CD8-positive, alpha-beta memory T cell (primary cell): ENCODE measurements at regions of chr14 and their contacts with region 1.

Region 1: GRCh38 chr14:21455911-21456667 is at the start of gene CHD8:
- DNase-seq: peak; percentile 99 to 100 (median 100)
- H3K4me3 ChIP-seq: peak within 1 kb of the TSS; percentile 96
- H3K4me3 Mint-ChIP-seq: peak within 1 kb of the TSS; percentile 94 to 99 (median 97)
- H3K27ac ChIP-seq: peak within 1 kb of the TSS; percentile 93
- H3K27ac Mint-ChIP-seq: peak within 1 kb of the TSS; percentile 92 to 99 (median 98)
- H3K4me1 ChIP-seq: peaks cover 37% of the 10 kb centered on the region
- H3K4me1 Mint-ChIP-seq: peaks cover 34 to 43% (median 42%) of the 10 kb centered on the region in 3 donors
- H3K27me3 ChIP-seq: no peaks in the 10 kb centered on the region
- H3K27me3 Mint-ChIP-seq: no peaks in the 10 kb centered on the region
- total RNA-seq, gene CHD8: 90.0 to 96.1 TPM

Region 2: DNA sequence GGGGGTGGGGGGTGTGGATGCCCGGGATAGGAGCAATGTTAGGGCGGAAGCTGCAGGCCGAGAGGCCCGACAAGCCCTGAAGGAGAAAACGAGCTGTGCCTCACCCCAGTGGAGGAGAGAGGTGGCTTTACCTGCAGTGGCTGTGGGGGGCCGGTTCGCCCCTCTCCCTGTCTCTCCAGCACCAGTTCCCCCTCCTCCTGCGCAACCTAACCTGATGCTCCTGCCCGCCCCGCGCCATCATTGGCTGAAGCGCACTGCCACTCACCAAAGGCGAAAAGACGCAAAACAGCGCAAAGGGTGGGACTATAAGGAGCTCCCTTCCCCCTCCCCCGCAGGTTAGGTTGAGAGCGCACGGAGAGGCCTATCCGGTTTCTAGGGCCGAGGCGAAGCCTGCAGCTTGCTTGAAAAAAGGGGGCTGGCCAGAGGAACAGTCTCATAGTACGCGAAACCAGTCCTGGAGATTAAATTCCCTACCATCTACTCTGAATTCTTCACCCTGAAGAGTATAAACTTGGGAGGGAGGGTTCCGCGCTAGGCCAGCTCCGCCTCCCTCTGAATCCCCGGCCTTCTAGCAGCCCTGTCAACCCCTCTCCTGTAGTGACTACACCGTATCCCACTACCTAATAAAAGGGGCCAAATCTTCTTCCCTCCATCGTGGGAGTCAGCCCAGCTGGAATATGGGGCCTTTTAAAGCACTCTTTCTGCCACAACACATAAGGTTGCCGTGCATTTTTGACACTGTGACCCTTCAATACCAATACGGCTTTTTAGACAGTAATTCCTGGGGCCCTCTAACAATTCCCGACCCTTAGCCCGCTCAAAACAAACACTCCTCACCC is 18.8 kb before region 1 on chr14:
- CTCF ChIA-PET with region 1: interaction called, 50 read pairs
- POLR2A ChIA-PET with region 1: interaction called, 47 read pairs
- DNase-seq: peak; percentile 97 to 99 (median 98)
- H3K4me3 ChIP-seq: peak overlapping the region; percentile 91
- H3K4me3 Mint-ChIP-seq: peak overlapping the region; percentile 91 to 97 (median 95)
- H3K27ac ChIP-seq: peak overlapping the region; percentile 82
- H3K27ac Mint-ChIP-seq: peak overlapping the region; percentile 84 to 98 (median 95)
- H3K4me1 ChIP-seq: peaks cover 34% of the 10 kb centered on the region
- H3K4me1 Mint-ChIP-seq: peaks cover 61 to 81% (median 79%) of the 10 kb centered on the region in 3 donors
- H3K27me3 ChIP-seq: no peaks in the 10 kb centered on the region
- H3K27me3 Mint-ChIP-seq: no peaks in the 10 kb centered on the region

Region 3: DNA sequence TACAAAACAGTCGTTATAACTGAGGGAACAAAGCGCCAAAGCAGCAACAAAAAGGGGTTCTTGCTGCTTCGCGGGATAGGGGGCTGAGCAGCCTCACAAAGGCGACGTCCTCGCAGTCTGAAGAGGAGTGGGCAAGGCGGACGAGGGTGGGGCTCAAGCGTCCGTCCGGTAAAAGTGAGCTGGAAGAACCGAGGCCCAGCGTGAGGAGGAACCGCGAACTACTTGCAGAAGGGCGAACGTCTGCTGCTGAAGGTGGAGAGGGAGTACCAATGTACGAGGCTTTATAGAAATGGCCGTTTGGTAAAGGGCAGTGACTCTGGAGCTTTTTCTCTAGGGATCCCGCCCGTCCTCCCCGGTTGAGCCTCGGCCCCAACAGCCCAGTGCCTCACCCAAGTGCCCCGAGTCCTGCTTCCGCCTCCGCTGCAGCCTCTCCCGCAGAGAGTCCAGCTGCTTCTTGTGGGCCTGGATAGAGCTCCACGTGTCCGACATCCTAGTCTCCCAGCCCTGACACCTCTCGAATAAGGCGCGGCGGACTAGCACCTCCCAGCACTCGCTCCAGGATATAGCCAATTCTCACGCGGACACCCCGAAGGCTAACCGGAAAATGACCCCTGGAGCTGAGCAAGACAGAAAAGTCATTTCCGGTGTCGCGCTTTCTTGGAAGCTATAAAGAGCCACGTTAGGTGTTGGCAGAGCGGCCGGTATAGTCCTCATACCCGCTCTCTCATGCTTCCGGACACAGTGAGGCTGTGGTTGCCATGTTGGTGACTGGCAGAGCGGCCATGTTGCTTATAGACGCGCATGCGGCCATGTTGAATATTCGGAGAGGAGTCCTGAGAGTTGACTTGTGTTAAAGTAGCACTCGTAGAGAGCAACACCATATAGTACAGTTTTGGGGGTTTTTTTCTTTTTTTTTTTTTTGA is 54.9 kb after region 1 on chr14 and contains the start of gene METTL3:
- CTCF ChIA-PET with region 1: interaction called, 10 read pairs
- POLR2A ChIA-PET with region 1: interaction called, 13 read pairs
- DNase-seq: peak; percentile 88 to 97 (median 91)
- H3K4me3 ChIP-seq: peak within 1 kb of the TSS; percentile 100
- H3K4me3 Mint-ChIP-seq: peak within 1 kb of the TSS; percentile 97 to 100 (median 99)
- H3K27ac ChIP-seq: peak within 1 kb of the TSS; percentile 95
- H3K27ac Mint-ChIP-seq: peak within 1 kb of the TSS; percentile 92 to 99 (median 99)
- H3K4me1 ChIP-seq: peaks cover 18% of the 10 kb centered on the region
- H3K4me1 Mint-ChIP-seq: peaks cover 31 to 46% (median 45%) of the 10 kb centered on the region in 3 donors
- H3K27me3 ChIP-seq: no peaks in the 10 kb centered on the region
- H3K27me3 Mint-ChIP-seq: peaks cover 0 to 3% of the 10 kb centered on the region in 2 donors
- total RNA-seq, gene METTL3: 54.1 to 58.9 TPM

Region 4: DNA sequence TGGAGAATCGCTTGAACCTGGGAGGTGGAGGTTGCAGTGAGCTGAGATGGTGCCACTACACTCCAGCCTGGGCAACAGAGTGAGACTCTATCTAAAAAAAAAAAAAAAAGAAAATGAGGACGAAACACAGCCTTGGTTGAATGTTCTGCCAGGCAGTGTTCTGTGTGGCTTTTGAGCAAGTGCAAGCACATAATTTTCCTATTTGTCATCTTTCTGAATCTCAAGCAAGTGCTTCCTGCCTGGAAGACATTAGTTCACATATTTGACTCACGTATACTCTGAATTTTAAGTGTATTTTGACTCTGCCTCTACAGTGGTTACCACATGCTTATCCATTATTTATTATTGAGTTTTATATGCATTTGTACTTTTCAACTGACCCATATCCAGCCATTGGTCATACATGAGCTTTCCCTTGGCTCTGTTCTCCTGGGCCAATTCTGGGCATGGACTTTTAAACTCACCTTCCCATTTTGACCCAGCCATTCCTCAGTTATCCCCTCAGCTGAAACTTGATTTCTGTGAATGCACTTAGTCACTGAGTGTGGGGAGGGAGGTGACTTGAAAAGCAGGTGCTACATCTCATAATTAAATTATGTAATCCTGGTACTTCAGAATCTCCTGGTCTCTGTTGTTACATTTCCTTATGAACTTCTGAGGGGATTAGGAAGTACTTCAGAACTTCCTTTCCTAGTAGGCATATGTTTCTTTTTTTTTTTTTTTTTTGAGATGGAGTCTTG is 170.6 kb after region 1 on chr14:
- CTCF ChIA-PET with region 1: no interaction called
- POLR2A ChIA-PET with region 1: no interaction called
- DNase-seq: no peak
- H3K4me3 ChIP-seq: no peak overlapping the region
- H3K4me3 Mint-ChIP-seq: no peak overlapping the region
- H3K27ac ChIP-seq: no peak overlapping the region
- H3K27ac Mint-ChIP-seq: no peak overlapping the region
- H3K4me1 ChIP-seq: no peaks in the 10 kb centered on the region
- H3K4me1 Mint-ChIP-seq: no peaks in the 10 kb centered on the region
- H3K27me3 ChIP-seq: no peaks in the 10 kb centered on the region
- H3K27me3 Mint-ChIP-seq: peaks cover 7 to 28% of the 10 kb centered on the region in 2 donors